Adrenal gland (tissue), 19 donors: ENCODE measurements at regions of chr20 and their contacts with region 1.

Region 1: DNA sequence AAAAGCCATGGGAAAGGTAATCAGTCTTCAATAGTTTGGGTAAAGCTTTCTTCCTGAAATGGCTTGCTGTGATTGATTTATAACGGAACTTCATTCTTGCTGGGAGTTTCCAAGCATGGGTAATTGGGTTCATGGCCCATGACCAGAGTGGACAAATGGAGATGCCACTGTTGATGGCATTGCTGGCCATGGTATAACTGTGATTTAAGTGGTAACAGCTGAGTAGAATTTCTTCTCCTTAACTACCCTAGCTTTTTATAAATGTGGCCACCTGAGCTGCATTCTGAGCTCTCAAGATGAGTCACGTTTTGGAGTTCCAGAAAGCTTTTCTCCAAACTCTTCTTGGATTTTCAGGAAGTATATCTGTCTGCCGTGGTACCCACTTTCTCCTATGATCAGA is 39.9 kb upstream of the SNRPB2 start:
- DNase-seq: no peak
- H3K4me3 ChIP-seq: no peak overlapping the region
- H3K27ac ChIP-seq: no peak overlapping the region
- H3K4me1 ChIP-seq: no peaks in the 10 kb centered on the region
- H3K27me3 ChIP-seq: no peaks in the 10 kb centered on the region
- CTCF ChIP-seq: no peak
- POLR2A ChIP-seq: no peak

Region 2: GRCh38 chr20:15902493-15902892 is 787.4 kb before region 1 on chr20:
- intact Hi-C with region 1: no loop called
- DNase-seq: no peak
- H3K4me3 ChIP-seq: no peak overlapping the region
- H3K27ac ChIP-seq: no peak overlapping the region
- H3K4me1 ChIP-seq: no peaks in the 10 kb centered on the region
- H3K27me3 ChIP-seq: no peaks in the 10 kb centered on the region
- CTCF ChIP-seq: no peak
- POLR2A ChIP-seq: no peak

Region 3: DNA sequence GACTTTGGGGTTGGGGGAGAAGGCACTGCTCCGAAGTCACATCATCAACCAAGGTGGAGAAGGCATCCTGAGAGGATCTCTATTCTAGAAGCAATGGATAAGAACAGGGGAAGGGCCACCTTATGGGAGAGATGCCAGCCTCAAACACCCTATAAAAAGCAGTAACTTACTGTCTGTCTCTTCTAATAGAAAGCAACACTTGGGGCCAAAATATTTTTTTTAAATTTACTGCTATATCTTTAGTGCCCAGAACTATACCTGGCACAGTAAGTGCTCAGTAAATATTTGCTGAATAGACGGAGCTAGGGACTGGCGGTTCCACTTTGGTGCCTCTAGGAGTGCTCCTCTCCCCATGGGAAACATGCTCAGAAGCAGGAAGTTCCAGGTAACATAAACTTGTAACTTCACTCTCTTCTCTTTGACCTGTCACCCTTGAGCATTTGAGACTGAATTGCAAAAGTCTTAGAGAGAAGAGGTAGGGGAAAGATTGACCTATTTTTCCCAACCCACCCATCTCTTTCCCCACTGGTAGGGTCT is 57.5 kb after region 1 on chr20:
- intact Hi-C with region 1: loop called in 1 of 2 experiments (anchors 10 kb)
- DNase-seq: no peak
- H3K4me3 ChIP-seq: no peak overlapping the region
- H3K27ac ChIP-seq: no peak overlapping the region
- H3K4me1 ChIP-seq: no peaks in the 10 kb centered on the region
- H3K27me3 ChIP-seq: peaks cover 3% of the 10 kb centered on the region
- CTCF ChIP-seq: no peak
- POLR2A ChIP-seq: no peak